Activated T-helper 1 cell treated with anti-CD3 and anti-CD28 coated beads, Interleukin-12 subunit alpha, Interleukin-12 subunit beta, Interleukin-2, Interleukin-4 antibody, amounts not matched to agents 30 ng/mL and 10 ng/mL and 1 ng/mL, durations not matched to agents 14 hours and 24 hours and 36 hours (primary cell): ENCODE measurements at regions of chr5 and their contacts with region 1.

Region 1: GRCh38 chr5:179613460-179614071 is 9.9 kb downstream of the HNRNPH1 start:
- DNase-seq: no peak
- H3K4me3 Mint-ChIP-seq: no peak overlapping the region
- H3K27ac Mint-ChIP-seq: peak overlapping the region; percentile 50
- H3K4me1 Mint-ChIP-seq: peaks cover 75% of the 10 kb centered on the region
- H3K27me3 Mint-ChIP-seq: no peaks in the 10 kb centered on the region

Region 2: GRCh38 chr5:178204182-178204894 is 1409.2 kb before region 1 on chr5 and contains the start of gene HNRNPAB:
- intact Hi-C with region 1: loop called (anchors 10 kb)
- DNase-seq: peak; percentile 94
- H3K4me3 Mint-ChIP-seq: peak within 1 kb of the TSS; percentile 99
- H3K27ac Mint-ChIP-seq: peak within 1 kb of the TSS; percentile 100
- H3K4me1 Mint-ChIP-seq: peaks cover 35% of the 10 kb centered on the region
- H3K27me3 Mint-ChIP-seq: peaks cover 2% of the 10 kb centered on the region
- total RNA-seq, gene HNRNPAB: 459 and 472 TPM in 2 replicates

Region 3: DNA sequence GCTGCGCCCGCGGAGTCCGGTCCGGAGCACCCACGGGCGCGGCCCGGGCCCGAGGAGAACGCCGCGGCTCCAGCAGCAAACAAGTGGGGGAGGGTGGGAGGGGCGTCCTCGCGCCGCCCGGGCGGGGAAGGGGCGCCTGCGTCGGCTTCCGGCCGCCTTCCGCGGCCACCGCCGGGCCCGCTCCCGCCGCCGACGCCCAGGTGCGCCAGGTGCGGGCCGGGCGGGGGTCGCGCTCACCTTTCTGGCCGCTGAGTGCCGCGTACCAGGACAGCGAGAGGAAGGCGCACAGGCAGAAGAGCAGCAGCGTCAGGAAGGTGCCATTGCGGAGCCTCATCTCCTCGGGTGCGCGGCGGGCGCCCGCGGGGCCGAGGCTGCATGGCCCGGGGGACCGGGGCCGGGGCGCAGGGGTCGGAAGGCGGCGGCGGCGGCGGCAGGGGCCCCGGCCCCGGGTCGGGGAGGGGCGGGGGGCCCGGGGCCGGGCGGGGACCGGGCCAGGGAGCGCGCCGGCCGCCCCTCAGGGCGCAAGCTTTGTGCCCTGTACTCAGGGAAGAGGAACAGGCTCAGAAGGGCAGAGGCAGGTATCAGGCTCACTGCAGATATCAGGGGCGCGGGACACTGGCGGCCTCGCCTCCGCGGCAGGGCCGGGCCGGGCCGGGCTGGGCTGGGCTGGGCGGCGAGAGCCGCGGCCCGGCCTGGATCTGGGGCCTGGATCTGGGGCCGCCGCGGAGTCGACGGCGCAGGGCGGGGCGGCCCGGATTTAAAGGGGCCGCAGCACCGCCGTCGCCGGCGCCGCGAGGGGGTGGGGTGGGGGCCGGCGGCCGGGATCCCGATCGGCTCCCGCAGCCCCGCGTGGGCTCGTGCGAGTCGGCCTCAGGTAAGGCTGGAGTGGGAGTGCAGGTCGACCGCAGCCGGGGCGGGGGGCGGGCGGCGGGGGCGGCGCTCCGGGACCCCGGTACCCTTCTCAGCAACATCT is 193.0 kb after region 1 on chr5 and contains the start of gene MGAT4B:
- intact Hi-C with region 1: no loop called
- DNase-seq: peak; percentile 67
- H3K4me3 Mint-ChIP-seq: peak within 1 kb of the TSS; percentile 86
- H3K27ac Mint-ChIP-seq: peak within 1 kb of the TSS; percentile 81
- H3K4me1 Mint-ChIP-seq: peaks cover 32% of the 10 kb centered on the region
- H3K27me3 Mint-ChIP-seq: no peaks in the 10 kb centered on the region
- total RNA-seq, gene MGAT4B: 124 and 132 TPM in 2 replicates